K562 (cell line): ENCODE measurements at regions of chr22 and their contacts with region 1.

Region 1: DNA sequence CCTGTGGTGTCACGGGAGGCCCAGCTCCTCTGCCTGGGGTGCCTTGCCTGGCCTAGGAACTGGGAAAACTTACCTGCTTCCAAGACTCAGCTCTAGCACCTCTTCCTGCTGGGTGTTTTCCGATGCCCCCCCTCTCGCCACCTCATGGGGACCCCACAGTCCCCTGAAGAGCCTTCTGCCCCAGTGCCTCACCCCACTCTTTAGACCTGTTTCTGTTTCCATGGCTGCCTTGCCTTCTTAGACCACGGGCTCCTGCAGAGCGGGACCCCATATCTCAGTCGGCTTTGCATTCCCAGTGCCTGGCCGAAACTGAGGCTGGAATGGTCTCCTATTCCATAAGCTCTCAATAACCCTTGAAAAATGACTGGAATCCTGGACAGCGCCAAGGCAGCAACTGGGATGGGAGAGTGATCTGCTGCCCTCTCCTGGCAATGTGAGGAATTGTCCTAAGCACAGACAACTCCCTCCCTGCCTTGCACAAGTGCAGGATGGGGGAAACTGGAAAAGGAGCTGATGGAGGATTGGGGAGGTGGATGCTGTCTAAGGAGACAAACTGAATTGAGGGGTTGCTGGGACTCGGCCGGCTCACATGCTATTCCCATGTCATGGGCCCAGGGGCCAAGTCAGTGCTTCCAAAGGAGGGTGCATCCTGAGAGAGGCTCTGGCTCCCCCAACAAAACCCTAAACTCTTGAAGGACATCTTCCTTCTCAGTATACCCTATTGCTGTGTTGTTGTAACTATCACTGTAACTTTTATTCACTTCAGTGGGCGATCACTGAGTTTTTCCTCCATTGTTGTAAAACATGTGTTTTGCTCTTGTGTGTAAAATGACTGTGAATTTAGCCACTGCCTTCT is 26.6 kb upstream of the IL17RA start:
- DNase-seq: peak; percentile 75 to 83 (median 78)
- ATAC-seq: peak; percentile 90
- H3K4me3 ChIP-seq: no peak overlapping the region
- H3K27ac ChIP-seq: no peak overlapping the region
- H3K4me1 ChIP-seq: no peaks in the 10 kb centered on the region; a peak in 1 of 5 replicates
- H3K27me3 ChIP-seq: no peaks in the 10 kb centered on the region
- CTCF ChIP-seq: peak; percentile 90 to 97 (median 94)
- EP300 ChIP-seq: no peak
- POLR2A ChIP-seq: no peak
- RAD21 ChIP-seq: peak; percentile 60 to 83

Region 2: DNA sequence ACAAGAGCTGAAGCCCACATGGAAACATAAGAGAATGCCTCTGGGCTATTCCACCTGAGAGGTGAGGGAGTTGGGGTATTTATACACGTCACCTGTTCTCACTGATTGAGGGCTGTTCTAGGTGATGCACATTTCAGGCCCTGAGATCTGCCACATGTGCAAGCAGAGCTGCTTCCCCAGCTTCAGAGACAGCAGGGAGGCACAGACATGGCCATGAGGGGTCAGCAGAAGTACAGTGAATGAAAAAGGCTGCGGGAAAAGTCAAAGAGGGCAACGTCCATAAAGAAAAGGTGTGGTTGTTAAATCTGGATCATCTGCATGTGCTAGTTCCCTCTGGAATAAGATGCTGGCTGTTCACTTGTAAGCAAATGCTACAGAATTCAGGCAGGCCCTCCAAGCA is 125.6 kb before region 1 on chr22:
- CTCF ChIA-PET with region 1: no interaction called
- POLR2A ChIA-PET with region 1: no interaction called
- in situ Hi-C with region 1: no loop called
- intact Hi-C with region 1: loop called (anchors 1 kb)
- DNase-seq: peak in 1 of 4 experiments; percentile 9
- ATAC-seq: peak; percentile 63; the same call in 2 of the 3 replicates
- H3K4me3 ChIP-seq: no peak overlapping the region
- H3K27ac ChIP-seq: no peak overlapping the region
- H3K4me1 ChIP-seq: no peaks in the 10 kb centered on the region
- H3K27me3 ChIP-seq: no peaks in the 10 kb centered on the region
- CTCF ChIP-seq: peak; percentile 6 to 50 (median 43); a peak in 4 of 6 replicates
- EP300 ChIP-seq: no peak
- POLR2A ChIP-seq: no peak
- RAD21 ChIP-seq: peak in 1 of 2 experiments; percentile 45; a peak in 2 of 4 replicates